ENCODE measurements at regions of chr17 and their contacts with region 1.

Region 1: GRCh38 chr17:68435876-68436842 is 21.1 kb downstream of the WIPI1 start:
- DNase-seq: peak; percentile 93
- ATAC-seq: peak; percentile 81
- H3K4me3 Mint-ChIP-seq: no peak overlapping the region
- H3K27ac Mint-ChIP-seq: peak overlapping the region; percentile 83
- H3K4me1 Mint-ChIP-seq: peaks cover 34% of the 10 kb centered on the region
- H3K27me3 Mint-ChIP-seq: no peaks in the 10 kb centered on the region
- CTCF ChIP-seq: peak; percentile 85

Region 2: GRCh38 chr17:68172461-68172954 is 263.7 kb before region 1 on chr17:
- CTCF ChIA-PET with region 1: interaction called, 6 read pairs
- POLR2A ChIA-PET with region 1: interaction called, 3 read pairs
- intact Hi-C with region 1: loop called (anchors 10 kb)
- DNase-seq: peak; percentile 84
- ATAC-seq: peak; percentile 82
- H3K4me3 Mint-ChIP-seq: no peak overlapping the region
- H3K27ac Mint-ChIP-seq: no peak overlapping the region
- H3K4me1 Mint-ChIP-seq: peaks cover 20% of the 10 kb centered on the region
- H3K27me3 Mint-ChIP-seq: peaks cover 3% of the 10 kb centered on the region
- CTCF ChIP-seq: peak; percentile 99

Region 3: GRCh38 chr17:68260051-68260762 is 176.0 kb before region 1 on chr17:
- CTCF ChIA-PET with region 1: interaction called, 122 read pairs
- POLR2A ChIA-PET with region 1: interaction called, 4 read pairs
- intact Hi-C with region 1: loop called (anchors 2 kb)
- DNase-seq: no peak
- ATAC-seq: no peak
- H3K4me3 Mint-ChIP-seq: peak overlapping the region; percentile 69
- H3K27ac Mint-ChIP-seq: peak overlapping the region; percentile 93
- H3K4me1 Mint-ChIP-seq: peaks cover 63% of the 10 kb centered on the region
- H3K27me3 Mint-ChIP-seq: no peaks in the 10 kb centered on the region
- CTCF ChIP-seq: no peak

Region 4: DNA sequence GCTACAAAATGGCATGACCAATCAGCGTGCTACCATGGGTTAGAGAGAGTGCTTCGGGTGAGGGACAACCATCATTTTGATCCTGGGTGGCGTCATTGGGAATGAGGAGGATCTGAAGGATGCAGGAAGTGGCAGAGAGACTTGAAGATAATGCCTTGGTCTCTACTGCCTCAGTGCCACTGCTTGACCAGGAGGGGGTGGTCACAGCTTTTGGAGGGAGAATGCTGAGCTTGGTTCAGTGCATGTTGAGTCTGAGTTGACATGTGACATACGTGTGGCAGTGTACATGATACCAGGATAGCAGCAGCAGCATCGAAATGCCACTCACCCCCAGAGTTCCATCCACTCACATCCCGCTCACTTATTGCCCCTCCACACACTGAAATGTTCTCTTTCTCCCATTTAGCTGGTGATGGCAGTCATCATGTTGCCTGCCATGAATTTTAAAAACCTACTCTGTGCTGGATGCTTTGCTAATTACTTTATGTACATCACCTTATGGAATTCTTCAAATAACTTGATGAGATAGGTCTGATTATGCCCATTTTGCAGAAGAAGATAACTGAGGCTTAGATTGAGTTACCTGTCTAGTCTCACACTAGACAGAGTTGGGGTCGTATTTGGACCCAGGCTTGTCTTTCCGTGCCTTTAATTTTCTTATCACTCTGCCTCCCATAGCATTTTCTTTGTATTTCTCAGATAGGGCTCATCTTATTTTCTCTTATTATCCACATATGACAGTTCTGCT is 108.2 kb before region 1 on chr17:
- CTCF ChIA-PET with region 1: interaction called, 10 read pairs
- POLR2A ChIA-PET with region 1: no interaction called
- intact Hi-C with region 1: no loop called
- DNase-seq: no peak
- ATAC-seq: peak; percentile 47
- H3K4me3 Mint-ChIP-seq: no peak overlapping the region
- H3K27ac Mint-ChIP-seq: no peak overlapping the region
- H3K4me1 Mint-ChIP-seq: peaks cover 14% of the 10 kb centered on the region
- H3K27me3 Mint-ChIP-seq: no peaks in the 10 kb centered on the region
- CTCF ChIP-seq: no peak

Region 5: DNA sequence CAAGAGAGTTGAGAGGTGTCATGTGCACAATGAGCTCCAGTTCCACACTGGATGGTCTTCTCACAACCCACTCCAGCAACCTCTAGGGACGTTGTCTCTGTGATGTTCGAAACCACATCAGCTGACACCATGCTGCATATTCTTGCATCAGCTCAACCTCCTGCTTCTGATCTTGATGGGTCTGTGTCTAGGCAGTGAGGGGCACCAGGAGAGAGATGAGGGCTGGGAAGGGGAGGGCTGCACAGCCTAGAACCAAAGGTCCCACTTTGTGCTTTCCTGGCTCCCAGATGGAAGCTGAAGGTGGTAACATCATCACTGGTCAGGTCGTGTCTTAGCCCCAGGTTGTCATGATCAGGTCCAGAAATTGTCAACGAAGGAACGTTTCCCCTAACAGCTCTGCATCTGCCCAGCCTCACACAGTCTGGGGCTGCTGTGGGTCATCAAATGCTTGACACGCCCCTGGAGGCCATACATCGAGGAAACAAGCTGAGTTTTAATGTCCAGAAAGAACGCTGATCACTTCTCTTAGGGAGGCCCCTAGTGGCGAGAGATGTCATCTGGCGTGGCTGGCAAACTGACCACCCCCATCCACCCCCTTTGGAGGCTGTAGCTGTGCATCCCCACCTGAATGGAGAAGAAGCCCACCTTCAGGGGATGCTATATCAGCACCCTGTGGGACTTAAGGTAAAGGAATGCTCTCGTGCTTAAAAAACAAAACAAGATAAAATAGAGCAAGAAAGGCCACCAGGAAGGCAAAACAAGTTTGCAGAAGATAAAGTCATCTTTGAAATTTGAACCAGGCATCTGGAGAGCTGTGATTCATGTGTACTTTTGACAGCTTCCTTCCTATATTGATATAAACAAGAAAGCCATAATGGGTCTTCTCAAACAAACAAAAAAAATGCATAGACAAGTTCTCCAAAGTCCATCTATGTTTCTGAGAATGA is 37.2 kb before region 1 on chr17:
- CTCF ChIA-PET with region 1: interaction called, 18 read pairs
- POLR2A ChIA-PET with region 1: no interaction called
- intact Hi-C with region 1: no loop called
- DNase-seq: peak; percentile 64
- ATAC-seq: peak; percentile 57
- H3K4me3 Mint-ChIP-seq: peak overlapping the region; percentile 22
- H3K27ac Mint-ChIP-seq: peak overlapping the region; percentile 93
- H3K4me1 Mint-ChIP-seq: peaks cover 35% of the 10 kb centered on the region
- H3K27me3 Mint-ChIP-seq: no peaks in the 10 kb centered on the region
- CTCF ChIP-seq: peak; percentile 77

Region 6: GRCh38 chr17:68450391-68450790 is 14.2 kb after region 1 on chr17:
- CTCF ChIA-PET with region 1: interaction called, 166 read pairs
- POLR2A ChIA-PET with region 1: interaction called, 3 read pairs
- intact Hi-C with region 1: no loop called
- DNase-seq: no peak
- ATAC-seq: no peak
- H3K4me3 Mint-ChIP-seq: no peak overlapping the region
- H3K27ac Mint-ChIP-seq: no peak overlapping the region
- H3K4me1 Mint-ChIP-seq: peaks cover 3% of the 10 kb centered on the region
- H3K27me3 Mint-ChIP-seq: no peaks in the 10 kb centered on the region
- CTCF ChIP-seq: no peak

Measured in activated CD8-positive, alpha-beta T cell treated with anti-CD3 and anti-CD28 coated beads for 36 hours (primary cell).